HepG2 (cell line): ENCODE measurements at regions of chr17 and their contacts with region 1.

Region 1: DNA sequence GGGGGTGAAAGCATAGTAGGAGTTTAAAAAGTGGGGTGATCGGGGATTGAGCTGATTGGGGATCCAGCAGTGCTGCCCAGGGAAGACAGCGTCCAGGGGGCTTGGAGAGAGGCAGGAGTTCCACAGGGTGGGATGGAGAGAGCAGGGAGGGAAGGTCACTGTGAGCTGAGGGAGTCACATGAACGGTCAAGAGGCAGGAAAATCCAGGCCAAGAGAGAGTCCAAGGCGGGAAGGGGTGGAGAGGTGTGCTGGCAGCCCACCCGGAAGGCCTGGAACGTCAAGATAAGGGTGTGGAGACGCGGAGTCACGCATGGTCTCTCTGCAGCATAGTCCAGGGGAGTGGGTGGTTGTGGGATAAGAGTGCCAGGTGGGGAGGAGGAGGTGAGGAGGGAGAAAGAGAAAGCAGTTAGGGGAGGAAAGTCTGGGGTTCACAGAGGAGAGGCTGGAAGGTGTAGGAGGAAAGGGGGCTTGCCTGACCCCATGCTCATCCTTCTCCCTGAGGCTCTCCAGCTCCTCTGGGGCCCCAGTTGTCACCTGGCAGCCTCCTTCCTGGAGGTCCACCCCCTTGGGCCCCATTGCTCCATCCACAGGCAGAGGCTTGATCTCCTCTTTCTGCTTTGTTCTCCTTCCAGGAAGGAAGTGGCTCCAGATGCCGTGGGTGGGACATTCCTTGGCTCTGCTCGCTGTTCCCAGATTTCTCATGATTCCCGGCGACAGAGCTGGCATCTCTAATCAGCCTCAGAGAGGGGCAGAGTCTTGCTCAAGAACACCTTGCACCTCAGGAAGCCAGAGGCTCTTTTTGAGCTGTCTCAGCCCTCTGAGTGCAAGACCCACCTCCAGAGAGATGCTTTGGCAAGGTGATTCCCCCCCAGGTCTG is 28.7 kb downstream of the CCR7 start:
- DNase-seq: no peak
- ATAC-seq: no peak
- H3K4me3 ChIP-seq: no peak overlapping the region
- H3K27ac ChIP-seq: no peak overlapping the region
- H3K4me1 ChIP-seq: peaks cover 78% of the 10 kb centered on the region
- H3K27me3 ChIP-seq: no peaks in the 10 kb centered on the region
- CTCF ChIP-seq: no peak
- EP300 ChIP-seq: no peak
- POLR2A ChIP-seq: no peak
- RAD21 ChIP-seq: no peak

Region 2: DNA sequence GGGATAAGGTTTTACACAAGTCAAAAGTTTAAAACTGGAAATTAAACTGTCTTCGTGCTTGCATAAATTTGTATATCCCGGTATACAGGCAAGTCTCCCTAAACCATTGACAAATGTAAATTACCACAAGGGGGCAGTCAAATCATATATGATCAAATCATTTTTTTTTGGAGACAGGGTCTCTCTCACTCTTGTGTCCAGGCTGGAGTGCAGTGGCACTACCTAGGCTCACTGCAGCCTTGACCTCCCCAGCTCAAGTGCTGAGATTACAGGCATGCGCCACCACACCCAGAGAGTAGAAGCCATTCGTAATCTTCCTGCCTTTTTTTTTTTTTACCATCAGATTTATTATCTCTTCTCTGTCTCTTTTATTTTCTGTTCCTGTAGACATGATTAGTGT is 137.3 kb before region 1 on chr17:
- CTCF ChIA-PET with region 1: interaction called, 33 read pairs
- POLR2A ChIA-PET with region 1: no interaction called
- in situ Hi-C with region 1: no loop called
- intact Hi-C with region 1: loop called (anchors 1 kb)
- DNase-seq: peak; percentile 74
- ATAC-seq: peak; percentile 71
- H3K4me3 ChIP-seq: no peak overlapping the region
- H3K27ac ChIP-seq: no peak overlapping the region
- H3K4me1 ChIP-seq: no peaks in the 10 kb centered on the region
- H3K27me3 ChIP-seq: no peaks in the 10 kb centered on the region
- CTCF ChIP-seq: peak; percentile 51
- EP300 ChIP-seq: no peak
- POLR2A ChIP-seq: no peak
- RAD21 ChIP-seq: peak; percentile 55; the same call in 1 of the 2 replicates

Region 3: DNA sequence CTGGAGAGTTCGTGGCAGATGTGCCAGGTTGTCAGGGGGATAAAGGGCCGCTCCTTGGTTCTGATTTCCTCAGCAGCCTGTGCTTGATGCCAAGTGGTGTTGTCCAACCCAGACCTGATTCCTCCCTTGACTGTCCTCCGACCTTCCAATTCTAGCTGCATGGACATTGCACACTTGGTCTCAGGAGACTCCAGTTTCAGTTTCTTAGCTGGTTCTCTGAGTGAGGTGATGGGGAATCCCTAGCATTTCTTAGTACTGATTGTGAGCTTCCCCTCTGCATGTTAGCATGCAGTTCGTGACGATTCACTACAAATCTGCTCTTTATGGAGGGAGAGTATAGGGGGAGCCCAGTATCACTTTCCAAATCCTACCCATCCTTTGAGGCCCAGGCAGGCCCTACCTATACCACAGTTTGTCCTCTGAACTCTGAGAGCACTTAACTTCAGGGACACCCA is 41.1 kb after region 1 on chr17:
- CTCF ChIA-PET with region 1: no interaction called
- POLR2A ChIA-PET with region 1: no interaction called
- in situ Hi-C with region 1: no loop called
- intact Hi-C with region 1: no loop called
- DNase-seq: no peak
- ATAC-seq: no peak
- H3K4me3 ChIP-seq: no peak overlapping the region
- H3K27ac ChIP-seq: no peak overlapping the region
- H3K4me1 ChIP-seq: peaks cover 8% of the 10 kb centered on the region
- H3K27me3 ChIP-seq: peaks cover 0 to 16% of the 10 kb centered on the region in 2 experiments; a peak in 3 of 5 replicates
- CTCF ChIP-seq: no peak
- EP300 ChIP-seq: no peak
- POLR2A ChIP-seq: no peak
- RAD21 ChIP-seq: no peak